ENCODE measurements at regions of chr1 and their contacts with region 1.

Region 1: GRCh38 chr1:236759252-236759859 is 35.7 kb upstream of the MTR start:
- DNase-seq: peak; percentile 66
- H3K4me3 ChIP-seq: peak overlapping the region; percentile 14
- H3K27ac ChIP-seq: no peak overlapping the region
- H3K4me1 ChIP-seq: no peaks in the 10 kb centered on the region
- CTCF ChIP-seq: peak; percentile 89

Region 2: GRCh38 chr1:236812334-236813030 is 53.1 kb after region 1 on chr1:
- CTCF ChIA-PET with region 1: no interaction called
- POLR2A ChIA-PET with region 1: no interaction called
- intact Hi-C with region 1: no loop called
- DNase-seq: no peak
- H3K4me3 ChIP-seq: no peak overlapping the region
- H3K27ac ChIP-seq: no peak overlapping the region
- H3K4me1 ChIP-seq: no peaks in the 10 kb centered on the region
- CTCF ChIP-seq: no peak

Region 3: GRCh38 chr1:236868625-236869467 is 109.5 kb after region 1 on chr1:
- CTCF ChIA-PET with region 1: no interaction called
- POLR2A ChIA-PET with region 1: no interaction called
- intact Hi-C with region 1: loop called (anchors 2 kb)
- DNase-seq: peak; percentile 62
- H3K4me3 ChIP-seq: no peak overlapping the region
- H3K27ac ChIP-seq: no peak overlapping the region
- H3K4me1 ChIP-seq: no peaks in the 10 kb centered on the region
- CTCF ChIP-seq: peak; percentile 95

Region 4: DNA sequence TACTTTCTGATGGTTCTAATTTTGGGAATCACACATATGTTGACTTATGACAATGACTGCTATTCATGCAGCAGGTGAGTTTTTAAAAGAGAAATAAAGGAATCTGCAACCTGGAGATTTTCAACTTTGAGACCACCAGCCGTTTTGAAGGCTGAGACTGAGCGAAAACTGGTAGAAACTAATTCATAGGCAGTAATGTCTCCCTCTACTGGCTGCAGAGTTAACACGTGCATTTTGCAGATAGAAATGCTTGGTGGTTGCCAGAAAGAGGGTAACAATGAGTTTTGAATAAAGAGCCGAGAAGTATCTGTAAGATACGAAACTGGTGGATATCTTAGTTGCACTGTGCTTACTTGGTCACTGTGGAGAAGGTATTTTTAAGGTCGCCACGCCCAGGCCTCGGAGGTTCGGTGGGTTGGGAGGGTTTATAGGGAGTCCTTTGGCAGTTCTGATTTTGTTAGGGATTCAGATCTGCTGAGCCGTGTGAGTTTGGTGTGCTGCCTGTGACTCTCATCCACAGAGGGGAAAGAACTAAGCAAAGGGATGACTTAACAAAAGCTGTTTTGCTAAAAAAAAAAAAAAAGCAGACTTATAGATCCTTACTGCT is 365.6 kb after region 1 on chr1:
- CTCF ChIA-PET with region 1: no interaction called
- POLR2A ChIA-PET with region 1: no interaction called
- intact Hi-C with region 1: loop called (anchors 10 kb)
- DNase-seq: peak; percentile 19
- H3K4me3 ChIP-seq: no peak overlapping the region
- H3K27ac ChIP-seq: no peak overlapping the region
- H3K4me1 ChIP-seq: no peaks in the 10 kb centered on the region
- CTCF ChIP-seq: peak; percentile 84

Region 5: DNA sequence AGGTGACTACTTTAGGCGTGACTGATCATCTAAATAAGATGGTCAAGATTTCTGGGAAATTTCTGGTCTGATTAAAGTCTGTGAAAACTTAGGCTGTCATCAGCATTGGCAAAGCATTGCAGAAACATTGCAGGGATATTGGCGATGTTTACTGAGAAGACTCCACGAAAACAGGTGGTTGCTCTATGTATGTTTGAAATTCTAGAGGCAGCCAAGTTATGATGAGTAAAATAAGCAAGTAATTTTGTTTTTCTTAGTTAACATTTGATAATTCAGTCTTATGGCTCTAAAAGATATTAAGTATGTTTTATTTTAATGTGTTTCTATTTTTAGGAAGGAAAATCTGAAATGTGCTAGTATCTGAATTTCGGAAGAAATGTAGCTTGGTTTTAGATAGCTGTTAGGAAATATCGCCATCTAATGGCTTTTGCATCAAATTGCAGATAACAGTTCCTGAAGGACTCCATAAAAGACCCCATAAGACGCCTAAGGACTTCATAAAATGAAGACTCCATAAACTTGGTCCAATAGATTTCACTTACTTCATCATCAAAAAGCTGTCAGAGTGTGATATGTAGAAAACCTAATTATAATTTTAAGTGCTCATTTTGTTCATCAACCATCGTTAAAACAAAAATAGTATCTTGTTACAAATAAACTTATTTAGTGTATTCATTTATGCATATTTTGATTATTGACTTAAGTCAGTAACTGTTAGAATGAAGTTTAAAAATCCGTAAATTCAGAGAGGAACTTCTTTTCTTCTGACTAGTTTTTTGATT is 627.2 kb after region 1 on chr1:
- CTCF ChIA-PET with region 1: no interaction called
- POLR2A ChIA-PET with region 1: no interaction called
- intact Hi-C with region 1: loop called (anchors 5 kb)
- DNase-seq: peak; percentile 49
- H3K4me3 ChIP-seq: no peak overlapping the region
- H3K27ac ChIP-seq: no peak overlapping the region
- H3K4me1 ChIP-seq: no peaks in the 10 kb centered on the region
- CTCF ChIP-seq: peak; percentile 92

Region 6: DNA sequence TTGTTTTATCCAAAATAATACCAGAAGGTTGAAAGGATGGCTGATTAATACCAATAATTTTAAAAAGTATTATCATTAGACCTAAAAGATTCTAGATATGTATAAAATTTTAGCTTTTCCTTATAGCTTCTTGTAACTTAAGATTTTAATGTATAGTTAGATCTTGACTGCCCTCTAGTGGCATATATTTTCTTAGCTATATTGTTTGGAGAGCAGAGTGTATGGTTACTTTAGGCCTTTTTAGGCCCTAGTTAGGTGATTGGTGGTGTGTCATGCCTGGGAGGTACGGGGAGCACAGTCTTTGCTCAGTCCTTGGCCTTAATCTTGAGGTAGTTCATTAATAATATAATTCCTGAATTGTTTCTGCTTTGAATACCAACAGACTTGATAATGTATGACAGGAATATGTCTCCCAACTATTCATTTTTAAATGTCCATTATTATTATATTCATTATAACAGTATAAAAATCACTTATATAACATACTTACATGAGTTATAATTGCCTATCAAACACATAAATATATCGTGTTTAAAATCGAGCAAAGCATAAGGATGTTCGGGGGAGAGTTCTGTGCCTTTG is 803.0 kb after region 1 on chr1:
- CTCF ChIA-PET with region 1: no interaction called
- POLR2A ChIA-PET with region 1: no interaction called
- intact Hi-C with region 1: loop called (anchors 10 kb)
- DNase-seq: peak; percentile 75
- H3K4me3 ChIP-seq: no peak overlapping the region
- H3K27ac ChIP-seq: no peak overlapping the region
- H3K4me1 ChIP-seq: no peaks in the 10 kb centered on the region
- CTCF ChIP-seq: peak; percentile 82